Testis (tissue), 5 donors: ENCODE measurements at regions of chr3 and their contacts with region 1.

Region 1: GRCh38 chr3:194685718-194686555 is at the start of gene FAM43A:
- DNase-seq: peak; percentile 94
- H3K4me3 ChIP-seq: peak within 1 kb of the TSS; percentile 63 to 77
- H3K27ac ChIP-seq: peak within 1 kb of the TSS; percentile 22 to 82
- H3K4me1 ChIP-seq: peaks cover 29% of the 10 kb centered on the region
- H3K27me3 ChIP-seq: no peaks in the 10 kb centered on the region
- CTCF ChIP-seq: no peak
- POLR2A ChIP-seq: peak; percentile 98
- total RNA-seq, gene FAM43A: 13.1 to 22.1 TPM

Region 2: DNA sequence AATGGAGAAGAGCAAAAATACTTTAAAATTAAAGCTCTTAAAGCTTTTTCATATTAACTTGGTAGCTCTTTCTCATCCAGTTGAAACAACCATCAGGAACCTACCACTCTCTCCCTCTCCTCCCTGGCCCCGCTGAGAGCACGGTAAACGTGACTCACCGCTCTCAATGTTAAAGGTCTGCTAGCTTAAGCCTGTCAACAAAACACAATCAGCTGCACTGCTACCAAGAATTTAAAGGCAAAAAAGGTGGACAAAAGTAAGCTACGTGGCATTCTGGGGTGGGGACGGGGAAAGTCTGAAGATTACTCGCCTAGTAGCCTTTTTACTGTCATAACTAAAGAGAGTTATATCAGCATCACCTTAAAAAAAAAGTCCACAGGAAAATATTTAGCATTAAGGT is 278.5 kb before region 1 on chr3:
- intact Hi-C with region 1: no loop called
- DNase-seq: no peak
- H3K4me3 ChIP-seq: no peak overlapping the region
- H3K27ac ChIP-seq: no peak overlapping the region
- H3K4me1 ChIP-seq: no peaks in the 10 kb centered on the region
- H3K27me3 ChIP-seq: no peaks in the 10 kb centered on the region
- CTCF ChIP-seq: no peak
- POLR2A ChIP-seq: no peak

Region 3: DNA sequence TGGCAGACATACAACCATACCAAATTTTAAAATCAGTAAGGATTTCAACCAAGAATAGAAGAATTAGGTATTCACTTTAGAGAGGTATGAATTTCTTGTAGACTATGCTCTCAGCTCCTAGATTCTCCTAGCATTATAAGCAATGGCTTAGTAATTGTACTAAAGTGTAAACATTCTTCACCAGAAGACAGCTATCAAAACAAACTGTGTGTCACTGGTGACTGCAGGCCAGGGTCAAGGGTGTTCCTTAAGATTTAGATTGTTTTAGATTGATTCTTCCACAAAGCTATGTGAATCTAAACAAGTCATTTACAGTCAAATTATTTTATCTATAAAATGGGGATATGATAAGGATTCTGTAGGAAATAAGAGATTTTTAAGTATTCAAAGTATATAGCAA is 263.7 kb before region 1 on chr3:
- intact Hi-C with region 1: no loop called
- DNase-seq: no peak
- H3K4me3 ChIP-seq: no peak overlapping the region
- H3K27ac ChIP-seq: no peak overlapping the region
- H3K4me1 ChIP-seq: no peaks in the 10 kb centered on the region
- H3K27me3 ChIP-seq: no peaks in the 10 kb centered on the region
- CTCF ChIP-seq: no peak
- POLR2A ChIP-seq: no peak

Region 4: DNA sequence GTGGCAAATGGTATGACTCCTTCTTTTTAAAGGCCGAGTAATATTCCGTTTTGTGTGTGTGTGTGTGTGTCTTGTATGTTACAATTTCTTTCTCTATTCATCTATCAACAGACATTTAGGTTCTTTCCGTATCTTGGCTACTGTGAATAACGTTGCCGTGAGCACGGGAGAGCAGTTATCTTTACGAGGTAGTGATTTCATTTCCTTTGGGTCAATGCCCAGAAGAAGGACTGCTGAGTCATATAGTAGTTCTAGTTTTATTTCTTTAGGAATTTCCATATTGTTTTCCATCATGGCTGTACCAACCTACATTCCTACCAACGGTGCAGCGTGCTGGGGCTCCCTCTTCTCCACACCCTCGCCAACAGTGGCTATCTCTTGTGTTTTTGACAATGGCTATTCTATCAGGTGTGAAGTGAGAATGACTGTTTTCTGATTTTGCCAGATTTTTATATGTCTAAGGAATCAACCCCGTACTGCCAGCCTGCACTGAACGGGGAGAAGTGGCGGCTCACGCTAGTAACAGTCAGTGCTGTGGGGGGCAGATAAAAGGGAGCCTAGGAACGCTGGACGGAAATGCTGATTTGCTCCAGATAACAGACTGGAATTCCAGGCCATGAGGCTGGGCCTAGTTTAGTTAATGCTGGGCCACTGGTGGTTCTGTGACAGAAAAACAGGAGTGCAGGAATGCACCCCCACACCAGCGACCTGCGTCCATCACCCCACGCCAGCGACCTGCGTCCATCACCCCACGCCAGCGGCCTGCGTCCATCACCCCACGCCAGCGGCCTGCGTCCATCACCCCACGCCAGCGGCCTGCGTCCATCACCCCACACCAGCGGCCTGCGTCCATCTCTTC is 416.9 kb after region 1 on chr3:
- intact Hi-C with region 1: loop called (anchors 5 kb)
- DNase-seq: peak; percentile 45
- H3K4me3 ChIP-seq: no peak overlapping the region
- H3K27ac ChIP-seq: no peak overlapping the region
- H3K4me1 ChIP-seq: peaks cover 7% of the 10 kb centered on the region
- H3K27me3 ChIP-seq: no peaks in the 10 kb centered on the region
- CTCF ChIP-seq: no peak
- POLR2A ChIP-seq: no peak

Region 5: GRCh38 chr3:195259475-195260279 is 573.7 kb after region 1 on chr3:
- intact Hi-C with region 1: loop called (anchors 5 kb)
- DNase-seq: peak; percentile 88
- H3K4me3 ChIP-seq: peak overlapping the region; percentile 71
- H3K27ac ChIP-seq: peak overlapping the region; percentile 71 to 78
- H3K4me1 ChIP-seq: peaks cover 12% of the 10 kb centered on the region
- H3K27me3 ChIP-seq: no peaks in the 10 kb centered on the region
- CTCF ChIP-seq: peak; percentile 68 to 100 (median 94)
- POLR2A ChIP-seq: no peak